ENCODE measurements at regions of chr1 and their contacts with region 1.

Region 1: GRCh38 chr1:230632273-230632873 is 9.9 kb upstream of the COG2 start:
- DNase-seq: peak; percentile 63
- ATAC-seq: peak; percentile 96
- H3K4me3 ChIP-seq: no peak overlapping the region
- H3K27ac ChIP-seq: no peak overlapping the region
- H3K4me1 ChIP-seq: peaks cover 40% of the 10 kb centered on the region
- H3K27me3 ChIP-seq: no peaks in the 10 kb centered on the region
- CTCF ChIP-seq: peak; percentile 94
- EP300 ChIP-seq: no peak
- POLR2A ChIP-seq: no peak
- RAD21 ChIP-seq: peak; percentile 82

Region 2: GRCh38 chr1:230681599-230681998 is 49.2 kb after region 1 on chr1:
- CTCF ChIA-PET with region 1: no interaction called
- POLR2A ChIA-PET with region 1: no interaction called
- in situ Hi-C with region 1: no loop called
- intact Hi-C with region 1: loop called (anchors 2 kb)
- DNase-seq: peak; percentile 77
- ATAC-seq: peak; percentile 94
- H3K4me3 ChIP-seq: no peak overlapping the region
- H3K27ac ChIP-seq: peak overlapping the region; percentile 67
- H3K4me1 ChIP-seq: peaks cover 40% of the 10 kb centered on the region
- H3K27me3 ChIP-seq: no peaks in the 10 kb centered on the region
- CTCF ChIP-seq: no peak
- EP300 ChIP-seq: peak in 1 of 2 experiments; percentile 61; a peak in 1 of 4 replicates
- POLR2A ChIP-seq: no peak
- RAD21 ChIP-seq: no peak

Region 3: GRCh38 chr1:230772457-230773395 is 140.4 kb after region 1 on chr1:
- CTCF ChIA-PET with region 1: interaction called, 24 read pairs
- POLR2A ChIA-PET with region 1: no interaction called
- in situ Hi-C with region 1: loop called (anchors 5 kb)
- intact Hi-C with region 1: loop called (anchors 1 kb)
- DNase-seq: peak; percentile 56
- ATAC-seq: peak; percentile 75
- H3K4me3 ChIP-seq: no peak overlapping the region; a peak in 1 of 6 replicates
- H3K27ac ChIP-seq: no peak overlapping the region
- H3K4me1 ChIP-seq: peaks cover 34% of the 10 kb centered on the region
- H3K27me3 ChIP-seq: peaks cover 1 to 7% of the 10 kb centered on the region in 2 experiments; a peak in 3 of 5 replicates
- CTCF ChIP-seq: peak; percentile 94
- EP300 ChIP-seq: no peak
- POLR2A ChIP-seq: no peak
- RAD21 ChIP-seq: peak; percentile 89

Region 4: GRCh38 chr1:230792691-230793665 is 160.6 kb after region 1 on chr1:
- CTCF ChIA-PET with region 1: interaction called, 6 read pairs
- POLR2A ChIA-PET with region 1: no interaction called
- in situ Hi-C with region 1: no loop called
- intact Hi-C with region 1: loop called (anchors 1 kb)
- DNase-seq: peak; percentile 31
- ATAC-seq: peak; percentile 61
- H3K4me3 ChIP-seq: no peak overlapping the region
- H3K27ac ChIP-seq: no peak overlapping the region
- H3K4me1 ChIP-seq: peaks cover 35% of the 10 kb centered on the region
- H3K27me3 ChIP-seq: peaks cover 0 to 6% of the 10 kb centered on the region in 2 experiments; a peak in 1 of 5 replicates
- CTCF ChIP-seq: peak; percentile 75
- EP300 ChIP-seq: no peak
- POLR2A ChIP-seq: no peak
- RAD21 ChIP-seq: peak; percentile 50; the same call in 1 of the 2 replicates

Region 5: DNA sequence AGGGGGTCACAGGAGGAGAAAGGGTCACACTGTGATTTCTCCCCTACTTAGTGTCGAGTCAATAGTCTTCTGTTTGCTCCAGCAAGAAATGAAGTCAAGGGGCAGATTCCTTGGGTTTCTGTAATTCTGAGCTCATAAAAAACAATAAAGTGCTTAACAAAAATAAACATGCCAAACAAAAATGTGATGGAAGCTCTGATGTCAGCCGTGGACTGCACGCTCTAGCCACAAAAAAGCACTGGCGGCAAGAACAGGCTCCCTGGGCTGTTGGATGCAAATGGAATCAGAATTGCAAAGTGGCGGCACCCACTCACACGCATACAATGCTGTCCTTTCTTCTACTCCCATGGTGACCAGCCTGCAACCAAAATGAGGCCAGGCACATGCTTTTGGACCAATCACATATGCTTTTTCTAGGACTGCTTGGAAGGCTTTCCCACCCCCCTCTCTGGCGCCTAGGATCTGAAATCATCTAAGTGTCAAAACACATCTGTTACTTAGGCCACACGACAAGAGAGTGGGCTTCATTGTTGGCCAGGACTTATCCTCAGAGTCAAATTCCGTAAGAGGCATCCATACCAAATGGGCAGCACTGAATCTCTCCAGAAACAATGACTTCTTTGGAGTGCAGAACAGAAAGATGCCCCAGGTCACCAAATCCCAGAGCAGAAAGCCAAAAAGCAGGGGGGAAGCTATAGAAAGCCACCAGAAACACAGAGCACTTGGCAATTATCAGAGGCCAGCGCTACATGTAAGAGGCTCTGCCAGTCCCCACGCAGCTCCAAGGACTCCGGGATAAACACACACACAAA is 226.8 kb after region 1 on chr1:
- CTCF ChIA-PET with region 1: no interaction called
- POLR2A ChIA-PET with region 1: no interaction called
- in situ Hi-C with region 1: no loop called
- intact Hi-C with region 1: no loop called
- DNase-seq: no peak
- ATAC-seq: no peak
- H3K4me3 ChIP-seq: no peak overlapping the region
- H3K27ac ChIP-seq: no peak overlapping the region
- H3K4me1 ChIP-seq: peaks cover 32% of the 10 kb centered on the region
- H3K27me3 ChIP-seq: no peaks in the 10 kb centered on the region
- CTCF ChIP-seq: no peak
- EP300 ChIP-seq: no peak
- POLR2A ChIP-seq: no peak
- RAD21 ChIP-seq: no peak

Region 6: DNA sequence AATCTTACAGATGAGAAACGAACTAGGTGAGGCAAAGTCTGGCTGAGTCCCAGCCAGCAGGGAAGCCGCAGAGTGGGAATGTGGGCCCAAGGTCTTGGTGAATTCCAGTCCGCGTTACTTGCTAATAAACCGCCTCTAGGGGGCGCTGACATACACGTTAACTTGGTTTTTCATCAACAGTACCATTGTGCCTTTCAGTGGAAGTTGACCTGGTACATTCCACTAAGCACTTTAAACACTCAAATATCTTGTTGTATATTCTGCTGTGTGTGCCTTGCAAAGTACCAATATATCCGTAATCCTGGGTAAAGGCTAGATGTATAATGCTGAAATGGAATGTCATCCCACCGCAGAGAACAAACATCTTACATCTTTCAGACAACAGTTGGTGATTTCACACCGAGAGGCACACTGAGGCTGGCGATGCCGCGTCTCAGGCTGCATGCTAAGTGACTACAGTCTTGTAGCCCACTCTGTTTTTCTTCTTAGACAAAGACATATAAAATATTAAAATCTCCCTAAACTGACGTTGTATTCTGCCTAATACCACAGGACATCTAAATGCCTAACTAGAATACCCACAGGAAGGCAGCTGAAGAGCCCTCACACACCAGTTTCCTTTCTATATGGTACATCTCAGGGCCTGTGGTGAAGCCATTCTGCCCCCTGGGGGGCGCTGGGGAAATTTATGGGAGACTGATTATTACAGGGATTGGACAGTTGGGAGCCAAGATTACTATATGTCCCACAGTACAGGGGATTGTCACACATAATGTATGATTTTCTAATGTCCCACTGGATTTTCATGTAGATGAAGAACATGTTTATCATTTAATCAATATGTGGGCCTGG is 285.1 kb after region 1 on chr1:
- CTCF ChIA-PET with region 1: interaction called, 5 read pairs
- POLR2A ChIA-PET with region 1: no interaction called
- in situ Hi-C with region 1: no loop called
- intact Hi-C with region 1: loop called (anchors 1 kb)
- DNase-seq: peak; percentile 80
- ATAC-seq: peak; percentile 90
- H3K4me3 ChIP-seq: no peak overlapping the region
- H3K27ac ChIP-seq: no peak overlapping the region
- H3K4me1 ChIP-seq: peaks cover 13% of the 10 kb centered on the region
- H3K27me3 ChIP-seq: no peaks in the 10 kb centered on the region
- CTCF ChIP-seq: peak; percentile 81
- EP300 ChIP-seq: no peak
- POLR2A ChIP-seq: no peak
- RAD21 ChIP-seq: peak; percentile 50; the same call in 1 of the 2 replicates

Region 7: GRCh38 chr1:230937371-230937770 is 305.0 kb after region 1 on chr1:
- CTCF ChIA-PET with region 1: no interaction called
- POLR2A ChIA-PET with region 1: no interaction called
- in situ Hi-C with region 1: no loop called
- intact Hi-C with region 1: no loop called
- DNase-seq: no peak
- ATAC-seq: no peak
- H3K4me3 ChIP-seq: no peak overlapping the region
- H3K27ac ChIP-seq: no peak overlapping the region
- H3K4me1 ChIP-seq: peaks cover 29% of the 10 kb centered on the region
- H3K27me3 ChIP-seq: no peaks in the 10 kb centered on the region
- CTCF ChIP-seq: no peak
- EP300 ChIP-seq: no peak
- POLR2A ChIP-seq: no peak
- RAD21 ChIP-seq: no peak

Measured in HepG2 (cell line).